Transverse colon (tissue), 4 donors: ENCODE measurements at regions of chr4 and their contacts with region 1.

Region 1: DNA sequence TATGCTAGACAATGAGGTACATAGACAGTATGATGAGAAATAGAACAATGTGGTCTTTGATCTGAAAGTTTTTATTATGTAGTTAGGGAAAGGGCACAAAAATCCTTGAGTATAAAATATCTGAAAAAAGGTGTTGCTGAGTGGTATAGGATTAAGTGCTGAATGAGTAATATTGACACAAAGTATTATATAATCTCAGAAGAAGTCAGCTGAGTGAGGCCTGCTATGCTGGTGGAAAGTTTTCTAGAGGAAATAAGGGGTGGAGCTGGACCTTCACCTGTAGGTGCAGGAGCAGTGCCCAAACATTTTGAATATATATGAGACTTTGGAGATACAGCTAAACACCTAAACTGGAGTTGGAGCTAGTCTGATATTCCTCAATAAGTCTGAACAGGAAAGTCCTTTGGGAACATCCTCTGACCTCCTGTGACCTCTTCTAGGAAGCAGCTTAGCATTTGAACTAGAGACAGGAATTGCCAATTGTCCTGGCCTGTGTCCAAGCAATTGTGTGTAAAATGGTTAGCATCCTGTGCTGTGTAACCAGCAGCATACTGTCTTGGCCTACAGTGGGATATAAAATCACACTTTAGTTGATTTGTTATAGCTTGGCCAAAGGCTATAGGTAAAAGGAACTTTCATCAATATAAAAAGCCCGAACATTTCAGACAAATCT is 285.3 kb downstream of the ANKRD50 start:
- DNase-seq: peak; percentile 51
- H3K4me3 ChIP-seq: no peak overlapping the region
- H3K27ac ChIP-seq: peak overlapping the region; percentile 10 to 46 (median 32)
- H3K4me1 ChIP-seq: peaks cover 0 to 47% (median 16%) of the 10 kb centered on the region in 4 donors
- H3K27me3 ChIP-seq: no peaks in the 10 kb centered on the region
- CTCF ChIP-seq: no peak
- EP300 ChIP-seq: no peak
- POLR2A ChIP-seq: no peak

Region 2: DNA sequence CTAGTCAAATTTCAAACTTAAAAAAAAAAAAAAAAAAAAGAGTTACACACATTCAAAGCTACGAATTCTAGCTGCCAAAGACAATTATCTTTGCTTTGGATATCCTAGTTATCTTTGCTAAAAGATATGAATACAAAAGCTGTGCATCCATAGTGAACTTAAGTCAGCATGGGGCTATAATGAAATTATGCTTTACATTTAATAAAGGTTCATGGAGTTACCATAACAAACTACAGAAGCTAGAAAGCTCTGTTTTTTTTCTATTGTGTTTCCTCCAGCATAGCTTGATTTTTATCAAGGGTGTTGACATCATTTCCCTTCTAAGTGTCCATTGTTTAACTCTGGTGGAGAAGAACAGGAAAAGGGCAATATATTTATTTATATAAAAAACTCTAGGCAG is 51.2 kb after region 1 on chr4:
- in situ Hi-C with region 1: no loop called
- intact Hi-C with region 1: loop called (anchors 2 kb)
- DNase-seq: no peak
- H3K4me3 ChIP-seq: no peak overlapping the region
- H3K27ac ChIP-seq: no peak overlapping the region
- H3K4me1 ChIP-seq: no peaks in the 10 kb centered on the region
- H3K27me3 ChIP-seq: no peaks in the 10 kb centered on the region
- CTCF ChIP-seq: no peak
- EP300 ChIP-seq: no peak
- POLR2A ChIP-seq: no peak